Dorsolateral prefrontal cortex (tissue), 120 donors: ENCODE measurements at regions of chr4 and their contacts with region 1.

Region 1: DNA sequence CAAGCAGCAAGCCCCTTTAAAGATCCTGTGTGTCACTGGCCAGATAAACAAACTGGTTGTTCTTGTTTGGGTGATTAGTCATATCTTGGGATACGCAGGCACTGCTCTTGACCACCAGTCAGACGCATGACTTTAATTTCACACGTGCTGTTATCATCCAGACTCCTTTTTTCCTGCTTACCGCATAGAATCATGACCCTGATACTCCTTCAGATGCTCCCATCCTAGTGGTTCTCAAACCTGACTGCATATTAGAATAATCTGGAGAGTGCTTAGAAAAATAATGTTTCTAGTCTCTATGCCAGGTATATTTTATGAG is 78.8 kb downstream of the CLDN22 start:
- DNase-seq: no peak
- H3K4me3 ChIP-seq: peak overlapping the region in 7 of 59 donors; percentile 8 to 39 (median 21)
- H3K27ac ChIP-seq: peak overlapping the region in 32 of 59 donors; percentile 1 to 81 (median 58)
- H3K27me3 ChIP-seq: no peaks in the 10 kb centered on the region
- CTCF ChIP-seq: no peak

Region 2: DNA sequence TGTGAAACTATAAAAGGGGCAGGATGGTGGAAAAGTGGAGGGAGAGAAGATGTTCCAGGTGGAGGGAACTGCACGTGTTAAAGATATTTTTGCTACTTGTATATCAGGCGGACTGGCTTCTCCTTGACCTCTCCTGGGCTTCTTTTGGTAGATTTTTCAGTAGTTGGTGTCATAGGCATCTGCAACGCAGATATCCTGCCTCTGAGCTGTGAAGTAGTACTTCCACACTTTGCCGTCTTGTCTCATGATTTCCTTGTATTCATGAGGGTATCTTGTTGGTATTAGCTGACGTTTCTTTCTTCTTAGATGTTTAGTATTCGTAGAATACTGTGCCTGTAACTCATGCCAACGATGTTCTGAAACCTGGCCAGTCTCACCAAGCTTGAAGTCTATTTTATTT is 61.2 kb before region 1 on chr4:
- intact Hi-C with region 1: loop called in 1 of 2 experiments (anchors 2 kb)
- DNase-seq: no peak
- H3K4me3 ChIP-seq: no peak overlapping the region
- H3K27ac ChIP-seq: no peak overlapping the region
- H3K27me3 ChIP-seq: no peaks in the 10 kb centered on the region
- CTCF ChIP-seq: no peak